Caco-2 (cell line): ENCODE measurements at regions of chr2 and their contacts with region 1.

Region 1: GRCh38 chr2:197777823-197778407 is 7.2 kb downstream of the BOLL start:
- DNase-seq: peak in 1 of 2 experiments; percentile 35
- H3K4me3 ChIP-seq: no peak overlapping the region
- H3K4me3 Mint-ChIP-seq: no peak overlapping the region
- H3K27ac Mint-ChIP-seq: no peak overlapping the region
- H3K4me1 ChIP-seq: no peaks in the 10 kb centered on the region
- H3K4me1 Mint-ChIP-seq: peaks cover 8% of the 10 kb centered on the region
- H3K27me3 ChIP-seq: no peaks in the 10 kb centered on the region
- H3K27me3 Mint-ChIP-seq: no peaks in the 10 kb centered on the region
- CTCF ChIP-seq: peak; percentile 61 to 81

Region 2: DNA sequence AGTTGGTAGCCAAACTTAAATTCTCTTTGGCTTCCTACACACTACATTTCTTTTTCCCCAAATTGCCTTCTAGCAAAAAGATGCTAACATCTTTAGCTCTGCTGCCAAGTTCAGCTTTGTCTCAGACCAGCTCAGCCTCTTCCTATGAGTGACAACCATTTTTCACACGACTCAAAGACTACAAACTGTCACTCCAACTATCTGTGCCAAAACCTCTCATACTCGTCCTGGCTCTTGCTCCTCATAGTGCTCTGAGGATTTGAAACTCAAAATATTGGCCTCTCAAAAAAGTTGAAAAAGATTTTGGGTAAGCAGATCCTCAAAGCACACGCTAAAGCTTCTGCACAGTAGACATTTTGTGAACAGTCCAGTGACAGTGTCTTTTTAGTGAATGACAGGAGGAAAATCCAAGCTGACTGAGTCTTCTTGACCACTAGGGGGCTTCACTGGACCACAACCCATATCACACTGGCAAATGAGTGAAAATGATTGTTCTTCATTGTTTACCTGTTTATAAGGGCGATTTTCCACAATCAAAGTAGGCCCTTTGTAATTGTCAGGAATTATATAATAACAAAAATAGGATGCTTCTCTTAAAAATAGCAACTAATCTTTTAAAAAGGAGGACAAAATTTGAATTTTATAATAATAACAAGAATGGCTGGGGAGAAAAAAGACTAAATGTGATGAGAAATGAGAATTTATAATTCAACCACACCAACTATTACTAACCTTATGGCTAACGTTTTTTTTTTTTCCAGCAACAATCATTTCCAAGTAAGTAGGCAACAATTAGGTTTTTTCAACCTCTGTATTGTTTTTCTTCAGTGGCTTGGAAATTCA is 765.9 kb before region 1 on chr2:
- CTCF ChIA-PET with region 1: no interaction called
- POLR2A ChIA-PET with region 1: no interaction called
- intact Hi-C with region 1: loop called (anchors 5 kb)
- DNase-seq: peak; percentile 43 to 51
- H3K4me3 ChIP-seq: no peak overlapping the region
- H3K4me3 Mint-ChIP-seq: no peak overlapping the region
- H3K27ac Mint-ChIP-seq: no peak overlapping the region
- H3K4me1 ChIP-seq: no peaks in the 10 kb centered on the region
- H3K4me1 Mint-ChIP-seq: no peaks in the 10 kb centered on the region
- H3K27me3 ChIP-seq: no peaks in the 10 kb centered on the region
- H3K27me3 Mint-ChIP-seq: peaks cover 22% of the 10 kb centered on the region
- CTCF ChIP-seq: peak; percentile 73 to 88

Region 3: GRCh38 chr2:197191177-197191939 is 586.6 kb before region 1 on chr2:
- CTCF ChIA-PET with region 1: no interaction called
- POLR2A ChIA-PET with region 1: no interaction called
- intact Hi-C with region 1: loop called (anchors 1 kb)
- DNase-seq: peak in 1 of 2 experiments; percentile 46
- H3K4me3 ChIP-seq: no peak overlapping the region
- H3K4me3 Mint-ChIP-seq: no peak overlapping the region
- H3K27ac Mint-ChIP-seq: no peak overlapping the region
- H3K4me1 ChIP-seq: no peaks in the 10 kb centered on the region
- H3K4me1 Mint-ChIP-seq: no peaks in the 10 kb centered on the region
- H3K27me3 ChIP-seq: peaks cover 1% of the 10 kb centered on the region; the same call in 1 of the 2 replicates
- H3K27me3 Mint-ChIP-seq: peaks cover 12% of the 10 kb centered on the region
- CTCF ChIP-seq: peak; percentile 47 to 66

Region 4: GRCh38 chr2:197599285-197599965 is 178.5 kb before region 1 on chr2:
- CTCF ChIA-PET with region 1: no interaction called
- POLR2A ChIA-PET with region 1: no interaction called
- intact Hi-C with region 1: loop called (anchors 10 kb)
- DNase-seq: peak in 1 of 2 experiments; percentile 38
- H3K4me3 ChIP-seq: no peak overlapping the region
- H3K4me3 Mint-ChIP-seq: no peak overlapping the region
- H3K27ac Mint-ChIP-seq: no peak overlapping the region
- H3K4me1 ChIP-seq: no peaks in the 10 kb centered on the region
- H3K4me1 Mint-ChIP-seq: no peaks in the 10 kb centered on the region
- H3K27me3 ChIP-seq: no peaks in the 10 kb centered on the region; the same call in 1 of the 2 replicates
- H3K27me3 Mint-ChIP-seq: peaks cover 13% of the 10 kb centered on the region
- CTCF ChIP-seq: peak; percentile 42 to 50

Region 5: DNA sequence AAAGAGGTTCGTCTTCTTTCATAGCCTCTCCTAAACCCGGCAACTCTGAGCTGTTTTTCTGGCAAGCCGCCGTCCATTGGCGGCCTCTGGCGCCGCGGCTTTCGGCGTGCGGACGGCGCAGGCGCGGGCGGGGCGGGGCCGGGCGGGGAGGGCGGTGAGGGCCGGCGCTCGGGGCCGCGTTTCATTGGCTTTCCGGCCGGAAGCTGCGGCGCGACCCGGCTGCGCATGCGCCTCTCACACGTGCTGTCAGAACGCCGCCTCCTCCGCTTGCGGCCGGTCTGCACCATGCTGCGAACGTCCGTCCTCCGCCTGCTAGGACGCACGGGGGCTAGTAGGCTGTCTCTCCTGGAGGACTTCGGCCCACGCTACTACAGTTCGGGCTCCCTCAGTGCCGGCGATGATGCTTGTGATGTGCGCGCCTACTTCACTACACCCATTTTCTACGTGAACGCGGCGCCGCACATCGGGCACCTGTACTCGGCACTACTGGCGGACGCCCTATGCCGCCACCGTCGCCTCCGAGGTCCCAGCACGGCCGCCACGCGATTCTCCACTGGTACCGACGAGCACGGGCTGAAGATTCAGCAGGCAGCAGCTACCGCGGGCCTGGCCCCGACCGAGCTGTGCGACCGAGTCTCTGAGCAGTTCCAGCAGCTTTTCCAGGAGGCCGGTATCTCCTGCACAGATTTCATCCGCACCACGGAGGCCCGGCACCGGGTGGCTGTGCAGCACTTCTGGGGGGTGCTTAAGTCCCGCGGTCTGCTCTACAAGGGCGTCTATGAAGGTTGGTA is 72.6 kb before region 1 on chr2 and contains the start of gene MARS2:
- CTCF ChIA-PET with region 1: no interaction called
- POLR2A ChIA-PET with region 1: no interaction called
- intact Hi-C with region 1: loop called (anchors 1 kb)
- DNase-seq: peak; percentile 92 to 94
- H3K4me3 ChIP-seq: peak within 1 kb of the TSS; percentile 86
- H3K4me3 Mint-ChIP-seq: peak within 1 kb of the TSS; percentile 90
- H3K27ac Mint-ChIP-seq: peak within 1 kb of the TSS; percentile 94
- H3K4me1 ChIP-seq: peaks cover 5% of the 10 kb centered on the region
- H3K4me1 Mint-ChIP-seq: peaks cover 12% of the 10 kb centered on the region
- H3K27me3 ChIP-seq: no peaks in the 10 kb centered on the region
- H3K27me3 Mint-ChIP-seq: peaks cover 3% of the 10 kb centered on the region
- CTCF ChIP-seq: no peak
- total RNA-seq, gene MARS2: 12.1 and 13.1 TPM in 2 replicates